Right cardiac atrium (tissue), 5 donors: ENCODE measurements at regions of chr1 and their contacts with region 1.

Region 1: DNA sequence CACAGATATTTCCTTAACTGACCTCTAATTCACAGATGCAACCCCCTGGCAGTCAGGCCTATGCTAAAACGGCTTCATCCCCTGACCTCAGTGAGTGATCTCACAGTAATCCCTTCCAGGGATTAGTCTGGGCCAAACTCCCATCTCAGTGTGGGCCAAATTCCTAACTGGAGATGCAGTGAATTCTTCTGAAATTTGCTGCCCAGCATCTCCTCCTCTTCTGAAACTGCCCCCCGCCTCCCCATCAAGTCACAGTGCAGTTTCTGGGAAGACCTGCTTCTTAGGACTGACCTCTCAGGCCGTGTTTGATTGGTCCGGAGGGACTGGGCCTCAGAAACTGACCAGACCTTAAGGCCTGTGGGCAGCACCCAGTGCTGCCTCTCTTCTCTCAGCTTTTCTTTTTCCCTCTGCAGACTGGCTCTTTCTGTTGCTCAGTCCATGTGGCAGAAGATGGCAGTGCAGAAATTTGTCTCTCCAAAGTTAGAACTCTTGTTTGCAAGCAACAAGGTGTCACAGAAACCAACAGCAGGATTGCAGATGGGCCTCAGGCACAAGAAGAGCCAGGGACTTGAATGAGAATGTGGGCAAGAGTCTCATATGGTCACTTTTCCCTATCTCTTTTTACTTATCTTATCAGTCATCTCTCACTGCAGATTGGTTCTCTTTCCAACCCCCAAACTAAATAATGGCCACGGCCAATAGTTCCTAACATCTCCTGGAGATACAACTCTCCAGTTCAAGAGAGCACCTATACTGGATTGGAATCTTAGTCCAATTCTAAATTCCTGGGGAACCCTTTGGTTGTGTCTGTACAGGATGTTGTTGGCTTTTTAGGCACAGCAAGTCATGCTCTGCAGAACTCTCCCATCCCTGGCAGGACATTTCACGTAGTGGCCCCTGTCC is 95.5 kb upstream of the RALGPS2 start:
- DNase-seq: peak in 1 of 3 donors; percentile 44
- ATAC-seq: no peak
- H3K4me3 ChIP-seq: no peak overlapping the region
- H3K27ac ChIP-seq: peak overlapping the region; percentile 52
- H3K4me1 ChIP-seq: peaks cover 2% of the 10 kb centered on the region
- H3K27me3 ChIP-seq: no peaks in the 10 kb centered on the region

Region 2: DNA sequence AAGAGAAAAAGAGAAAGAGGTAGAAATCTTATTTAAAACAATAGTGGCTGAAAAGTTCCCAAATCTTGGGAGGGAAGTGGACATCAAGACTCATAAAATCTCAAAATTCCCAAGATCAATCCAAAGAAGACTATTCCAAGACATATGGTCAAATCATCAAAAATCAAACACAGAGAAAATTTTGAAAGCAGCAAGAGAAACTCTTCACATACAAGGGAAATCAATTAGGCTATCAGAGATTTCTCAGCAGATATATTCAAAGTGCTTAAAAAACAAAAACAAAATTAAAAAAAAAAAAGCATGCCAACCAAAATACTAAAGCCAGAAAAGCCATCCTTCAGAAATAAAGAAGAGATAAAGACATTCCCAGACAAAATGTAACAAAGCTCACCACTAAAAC is 42.9 kb after region 1 on chr1:
- intact Hi-C with region 1: loop called in 1 of 4 experiments (anchors 10 kb)
- DNase-seq: no peak
- ATAC-seq: no peak
- H3K4me3 ChIP-seq: no peak overlapping the region
- H3K27ac ChIP-seq: no peak overlapping the region
- H3K4me1 ChIP-seq: no peaks in the 10 kb centered on the region
- H3K27me3 ChIP-seq: no peaks in the 10 kb centered on the region